Transverse colon (tissue), 4 donors: ENCODE measurements at regions of chr5 and their contacts with region 1.

Region 1: DNA sequence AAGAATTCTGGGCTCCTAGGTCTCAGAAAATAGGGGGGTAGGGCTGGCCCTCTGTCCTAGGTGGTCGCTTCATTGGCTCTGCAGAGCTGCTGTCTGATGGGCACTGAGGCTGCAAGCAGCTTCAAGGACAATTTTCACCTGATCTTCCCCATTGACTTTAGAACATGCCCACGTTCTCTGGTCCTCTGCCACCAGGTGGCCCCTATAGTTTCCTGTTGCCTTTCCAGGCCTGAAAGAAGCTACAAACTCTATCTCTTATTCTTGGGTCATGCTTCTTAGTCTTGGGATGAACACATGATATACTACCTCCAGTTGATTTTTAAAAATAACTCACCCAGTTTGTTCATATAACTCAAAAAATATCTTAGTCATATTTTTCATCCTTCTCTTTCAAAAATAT is 26.3 kb downstream of the SPZ1 start:
- DNase-seq: peak; percentile 30
- H3K4me3 ChIP-seq: no peak overlapping the region
- H3K27ac ChIP-seq: no peak overlapping the region
- H3K4me1 ChIP-seq: no peaks in the 10 kb centered on the region
- H3K27me3 ChIP-seq: no peaks in the 10 kb centered on the region
- CTCF ChIP-seq: peak in 3 of 5 experiments; percentile 33 to 37 (median 34)
- EP300 ChIP-seq: no peak
- POLR2A ChIP-seq: no peak

Region 2: GRCh38 chr5:80026841-80027240 is 319.2 kb before region 1 on chr5:
- in situ Hi-C with region 1: no loop called
- intact Hi-C with region 1: loop called (anchors 10 kb)
- DNase-seq: no peak
- H3K4me3 ChIP-seq: no peak overlapping the region
- H3K27ac ChIP-seq: no peak overlapping the region
- H3K4me1 ChIP-seq: no peaks in the 10 kb centered on the region
- H3K27me3 ChIP-seq: peaks cover under 1% of the 10 kb centered on the region
- CTCF ChIP-seq: no peak
- EP300 ChIP-seq: no peak
- POLR2A ChIP-seq: no peak

Region 3: GRCh38 chr5:80481019-80481893 is 135.2 kb after region 1 on chr5:
- in situ Hi-C with region 1: no loop called
- intact Hi-C with region 1: no loop called
- DNase-seq: peak; percentile 40
- H3K4me3 ChIP-seq: no peak overlapping the region
- H3K27ac ChIP-seq: no peak overlapping the region
- H3K4me1 ChIP-seq: no peaks in the 10 kb centered on the region
- H3K27me3 ChIP-seq: no peaks in the 10 kb centered on the region
- CTCF ChIP-seq: peak; percentile 57 to 71 (median 65)
- EP300 ChIP-seq: no peak
- POLR2A ChIP-seq: no peak